ENCODE measurements at regions of chr11 and their contacts with region 1.

Region 1: DNA sequence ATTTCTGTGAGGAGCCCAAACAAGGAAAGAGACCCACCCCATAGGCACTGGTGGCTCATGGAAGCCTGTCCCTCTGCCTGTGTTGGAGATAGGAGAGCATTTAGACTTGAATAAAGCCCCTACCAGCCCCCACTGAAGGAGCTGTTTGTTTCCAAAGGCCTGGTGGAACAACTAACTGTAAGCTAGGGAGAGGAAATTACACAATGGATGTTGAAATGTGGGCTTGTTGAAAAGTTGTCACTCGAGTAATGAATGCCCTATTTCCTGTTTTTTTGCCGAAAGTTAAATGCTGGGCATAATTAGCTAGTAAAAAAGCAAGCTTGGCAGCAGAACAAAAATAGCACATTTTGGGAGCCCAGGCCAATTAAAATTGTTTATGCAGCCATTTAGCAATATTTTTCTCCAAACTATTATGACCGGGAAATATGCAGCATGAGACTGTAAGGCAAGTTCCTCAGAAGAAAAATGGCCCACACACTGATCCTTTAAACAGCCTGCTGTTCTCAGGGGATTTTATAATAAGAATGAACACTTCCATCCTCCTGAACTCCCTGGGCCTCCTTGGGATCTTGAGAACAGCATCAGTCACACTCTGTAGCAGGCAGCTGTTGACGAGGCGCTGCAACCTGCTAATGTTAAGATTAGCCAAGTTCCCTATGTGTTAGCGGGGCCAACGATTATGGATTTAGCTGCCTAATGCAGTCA is 38.6 kb upstream of the LMO2 start:
- DNase-seq: peak; percentile 83 to 99 (median 93)
- H3K4me3 ChIP-seq: peak overlapping the region in 2 of 3 experiments; percentile 23 to 68
- H3K4me3 Mint-ChIP-seq: peak overlapping the region; percentile 56 to 85
- H3K27ac ChIP-seq: peak overlapping the region; percentile 85 to 99
- H3K27ac Mint-ChIP-seq: peak overlapping the region; percentile 94 to 99 (median 98)
- H3K4me1 ChIP-seq: peaks cover 79 to 82% of the 10 kb centered on the region in 2 donors
- H3K4me1 Mint-ChIP-seq: peaks cover 82% of the 10 kb centered on the region
- H3K27me3 ChIP-seq: no peaks in the 10 kb centered on the region
- H3K27me3 Mint-ChIP-seq: no peaks in the 10 kb centered on the region
- CTCF ChIP-seq: no peak

Region 2: GRCh38 chr11:33965032-33965431 is 34.6 kb after region 1 on chr11:
- intact Hi-C with region 1: loop called in 1 of 2 experiments (anchors 5 kb)
- DNase-seq: no peak
- H3K4me3 ChIP-seq: no peak overlapping the region
- H3K4me3 Mint-ChIP-seq: no peak overlapping the region
- H3K27ac ChIP-seq: no peak overlapping the region
- H3K27ac Mint-ChIP-seq: no peak overlapping the region
- H3K4me1 ChIP-seq: peaks cover 11% of the 10 kb centered on the region in 2 donors
- H3K4me1 Mint-ChIP-seq: peaks cover 18% of the 10 kb centered on the region
- H3K27me3 ChIP-seq: no peaks in the 10 kb centered on the region
- H3K27me3 Mint-ChIP-seq: peaks cover 0 to 1% (median 0%) of the 10 kb centered on the region in 3 donors
- CTCF ChIP-seq: no peak

Region 3: DNA sequence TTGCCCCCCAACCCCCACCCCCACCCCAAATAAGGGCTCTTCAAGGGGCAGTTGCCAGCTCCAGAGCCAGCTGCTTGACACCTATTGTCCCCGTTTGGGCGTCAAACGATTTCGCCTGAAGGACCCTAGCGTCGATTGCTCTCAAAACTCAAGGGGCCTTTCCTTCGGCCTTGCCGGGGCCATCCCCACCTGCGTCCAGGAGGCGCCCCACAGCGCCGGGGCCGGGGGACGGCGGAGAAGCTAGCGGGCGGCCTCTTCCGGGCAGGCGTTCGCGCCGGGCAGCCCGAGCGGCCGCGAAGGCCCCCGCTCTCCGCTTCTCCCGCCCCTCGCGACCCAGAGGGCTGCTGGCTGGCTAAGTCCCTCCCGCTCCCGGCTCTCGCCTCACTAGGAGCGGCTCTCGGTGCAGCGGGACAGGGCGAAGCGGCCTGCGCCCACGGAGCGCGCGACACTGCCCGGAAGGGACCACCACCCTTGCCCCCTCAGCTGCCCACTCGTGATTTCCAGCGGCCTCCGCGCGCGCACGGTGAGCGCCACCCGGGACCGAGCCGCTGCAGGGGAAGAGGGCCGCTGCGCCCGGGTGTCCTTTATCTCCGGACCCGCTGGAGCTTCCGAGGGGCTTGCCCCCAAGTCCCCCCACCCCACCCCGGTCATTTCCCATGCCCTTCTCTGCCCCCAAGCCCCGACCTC is 121.0 kb after region 1 on chr11 and contains the start of gene CAPRIN1:
- intact Hi-C with region 1: no loop called
- DNase-seq: peak; percentile 70 to 77 (median 74)
- H3K4me3 ChIP-seq: peak within 1 kb of the TSS; percentile 71 to 100 (median 79)
- H3K4me3 Mint-ChIP-seq: peak within 1 kb of the TSS; percentile 98 to 99
- H3K27ac ChIP-seq: peak within 1 kb of the TSS; percentile 91 to 99
- H3K27ac Mint-ChIP-seq: peak within 1 kb of the TSS; percentile 90 to 97 (median 95)
- H3K4me1 ChIP-seq: peaks cover 16 to 39% of the 10 kb centered on the region in 2 donors
- H3K4me1 Mint-ChIP-seq: peaks cover 35% of the 10 kb centered on the region
- H3K27me3 ChIP-seq: no peaks in the 10 kb centered on the region
- H3K27me3 Mint-ChIP-seq: peaks cover 0 to 1% (median 0%) of the 10 kb centered on the region in 3 donors
- CTCF ChIP-seq: no peak
- polyA plus RNA-seq, gene CAPRIN1: 50.4 to 81.5 (median 59.2) TPM

Region 4: GRCh38 chr11:34124885-34125668 is 194.6 kb after region 1 on chr11:
- intact Hi-C with region 1: no loop called
- DNase-seq: no peak
- H3K4me3 ChIP-seq: no peak overlapping the region
- H3K4me3 Mint-ChIP-seq: no peak overlapping the region
- H3K27ac ChIP-seq: no peak overlapping the region
- H3K27ac Mint-ChIP-seq: peak overlapping the region in 1 of 7 donors; percentile 25
- H3K4me1 ChIP-seq: no peaks in the 10 kb centered on the region
- H3K4me1 Mint-ChIP-seq: peaks cover 3% of the 10 kb centered on the region
- H3K27me3 ChIP-seq: no peaks in the 10 kb centered on the region
- H3K27me3 Mint-ChIP-seq: peaks cover 0 to 3% (median 2%) of the 10 kb centered on the region in 3 donors
- CTCF ChIP-seq: no peak

Region 5: GRCh38 chr11:35066783-35067423 is 1136.4 kb after region 1 on chr11:
- intact Hi-C with region 1: no loop called
- DNase-seq: no peak
- H3K4me3 ChIP-seq: no peak overlapping the region
- H3K4me3 Mint-ChIP-seq: no peak overlapping the region
- H3K27ac ChIP-seq: no peak overlapping the region
- H3K27ac Mint-ChIP-seq: peak overlapping the region in 6 of 7 donors; percentile 16 to 83 (median 68)
- H3K4me1 ChIP-seq: peaks cover 33 to 43% of the 10 kb centered on the region in 2 donors
- H3K4me1 Mint-ChIP-seq: peaks cover 20% of the 10 kb centered on the region
- H3K27me3 ChIP-seq: no peaks in the 10 kb centered on the region
- H3K27me3 Mint-ChIP-seq: peaks cover 0 to 2% (median 0%) of the 10 kb centered on the region in 3 donors
- CTCF ChIP-seq: no peak